Aorta (tissue), 5 donors: ENCODE measurements at regions of chr9 and their contacts with region 1.

Region 1: GRCh38 chr9:124708633-124709291 is 62.3 kb downstream of the NR6A1 start:
- DNase-seq: no peak
- ATAC-seq: no peak
- H3K4me3 ChIP-seq: no peak overlapping the region
- H3K27ac ChIP-seq: no peak overlapping the region
- H3K4me1 ChIP-seq: no peaks in the 10 kb centered on the region
- H3K27me3 ChIP-seq: no peaks in the 10 kb centered on the region

Region 2: DNA sequence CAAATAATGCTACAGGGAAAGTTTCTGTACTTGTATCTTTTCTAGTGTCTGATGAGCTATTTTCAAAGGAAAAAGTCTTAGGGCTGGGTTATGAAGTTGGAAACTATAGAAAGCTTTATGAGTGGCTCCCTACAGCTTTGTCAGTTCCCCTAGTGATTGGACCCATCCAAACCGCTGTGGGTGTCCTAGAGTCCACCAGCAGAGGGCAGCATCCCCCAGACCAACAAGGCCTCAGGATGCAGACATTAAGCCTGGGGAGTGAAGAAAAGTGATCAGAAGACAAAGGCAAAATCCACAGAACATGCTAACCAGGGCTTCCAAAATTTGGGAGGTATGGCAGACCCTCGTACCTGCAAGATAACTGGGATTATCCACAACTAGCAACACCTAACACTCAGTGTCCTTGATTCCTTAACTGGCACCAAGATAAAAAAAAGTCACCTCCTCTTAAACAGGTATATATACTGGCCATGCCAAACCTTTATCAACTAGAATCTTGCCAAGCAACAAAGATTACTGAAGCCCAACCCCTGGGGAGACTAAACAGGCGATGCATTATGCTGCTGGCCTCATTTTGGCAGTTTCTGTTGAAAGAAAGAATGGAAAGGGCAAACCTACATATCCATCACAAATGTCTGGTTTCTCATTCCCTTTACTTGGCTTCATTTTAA is 91.2 kb before region 1 on chr9:
- intact Hi-C with region 1: loop called (anchors 1 to 2 kb)
- DNase-seq: peak; percentile 82 to 91
- ATAC-seq: peak; percentile 86
- H3K4me3 ChIP-seq: no peak overlapping the region
- H3K27ac ChIP-seq: no peak overlapping the region
- H3K4me1 ChIP-seq: no peaks in the 10 kb centered on the region
- H3K27me3 ChIP-seq: no peaks in the 10 kb centered on the region

Region 3: GRCh38 chr9:124660341-124660801 is 48.4 kb before region 1 on chr9:
- intact Hi-C with region 1: loop called in 1 of 2 experiments (anchors 5 kb)
- DNase-seq: no peak
- ATAC-seq: no peak
- H3K4me3 ChIP-seq: peak overlapping the region; percentile 89 to 94
- H3K27ac ChIP-seq: no peak overlapping the region
- H3K4me1 ChIP-seq: no peaks in the 10 kb centered on the region
- H3K27me3 ChIP-seq: no peaks in the 10 kb centered on the region